PC-9 (cell line): ENCODE measurements at regions of chr1 and their contacts with region 1.

Region 1: GRCh38 chr1:225413708-225414375 is 14.0 kb downstream of the LBR start:
- DNase-seq: no peak
- H3K4me3 ChIP-seq: no peak overlapping the region
- H3K27ac ChIP-seq: no peak overlapping the region
- H3K4me1 ChIP-seq: 0 out of 2 replicates have a peak, but pooled peaks cover 7% of the 10 kb centered on the region
- H3K27me3 ChIP-seq: no peaks in the 10 kb centered on the region
- CTCF ChIP-seq: no peak

Region 2: GRCh38 chr1:224884361-224884801 is 529.5 kb before region 1 on chr1:
- CTCF ChIA-PET with region 1: no interaction called
- POLR2A ChIA-PET with region 1: interaction called, 10 read pairs
- intact Hi-C with region 1: no loop called
- DNase-seq: no peak
- H3K4me3 ChIP-seq: no peak overlapping the region
- H3K27ac ChIP-seq: no peak overlapping the region
- H3K4me1 ChIP-seq: 0 out of 2 replicates have a peak, but pooled peaks cover 8% of the 10 kb centered on the region
- H3K27me3 ChIP-seq: peaks cover under 1% of the 10 kb centered on the region
- CTCF ChIP-seq: no peak

Region 3: DNA sequence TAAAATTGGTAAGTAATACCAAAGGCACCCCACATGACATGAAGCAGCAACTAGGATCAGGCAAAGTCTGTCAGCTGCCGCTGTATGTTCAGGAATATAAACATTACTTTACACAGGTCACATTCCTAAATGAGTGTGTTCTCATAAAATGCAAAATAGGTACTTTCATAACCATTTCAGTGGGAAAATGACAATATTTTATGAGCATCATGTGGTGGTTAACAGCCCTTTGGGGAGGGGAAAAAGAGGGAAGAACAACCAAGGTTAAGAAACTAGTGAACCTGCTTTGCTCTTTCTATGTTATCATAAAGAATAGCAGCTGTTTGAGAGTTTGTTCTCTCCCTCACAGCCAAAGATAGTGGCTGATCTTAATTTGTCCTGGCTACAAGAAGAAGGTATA is 119.4 kb after region 1 on chr1:
- CTCF ChIA-PET with region 1: no interaction called
- POLR2A ChIA-PET with region 1: no interaction called
- intact Hi-C with region 1: no loop called
- DNase-seq: no peak
- H3K4me3 ChIP-seq: no peak overlapping the region
- H3K27ac ChIP-seq: peak overlapping the region; percentile 37; the same call in 1 of the 2 replicates
- H3K4me1 ChIP-seq: peaks cover 29% of the 10 kb centered on the region
- H3K27me3 ChIP-seq: no peaks in the 10 kb centered on the region
- CTCF ChIP-seq: no peak

Region 4: GRCh38 chr1:225987491-225988316 is 573.9 kb after region 1 on chr1:
- CTCF ChIA-PET with region 1: no interaction called
- POLR2A ChIA-PET with region 1: no interaction called
- intact Hi-C with region 1: loop called (anchors 10 kb)
- DNase-seq: peak in 1 of 2 experiments; percentile 41
- H3K4me3 ChIP-seq: no peak overlapping the region
- H3K27ac ChIP-seq: no peak overlapping the region
- H3K4me1 ChIP-seq: no peaks in the 10 kb centered on the region
- H3K27me3 ChIP-seq: no peaks in the 10 kb centered on the region
- CTCF ChIP-seq: peak; percentile 84